ENCODE measurements at regions of chr10 and their contacts with region 1.

Region 1: DNA sequence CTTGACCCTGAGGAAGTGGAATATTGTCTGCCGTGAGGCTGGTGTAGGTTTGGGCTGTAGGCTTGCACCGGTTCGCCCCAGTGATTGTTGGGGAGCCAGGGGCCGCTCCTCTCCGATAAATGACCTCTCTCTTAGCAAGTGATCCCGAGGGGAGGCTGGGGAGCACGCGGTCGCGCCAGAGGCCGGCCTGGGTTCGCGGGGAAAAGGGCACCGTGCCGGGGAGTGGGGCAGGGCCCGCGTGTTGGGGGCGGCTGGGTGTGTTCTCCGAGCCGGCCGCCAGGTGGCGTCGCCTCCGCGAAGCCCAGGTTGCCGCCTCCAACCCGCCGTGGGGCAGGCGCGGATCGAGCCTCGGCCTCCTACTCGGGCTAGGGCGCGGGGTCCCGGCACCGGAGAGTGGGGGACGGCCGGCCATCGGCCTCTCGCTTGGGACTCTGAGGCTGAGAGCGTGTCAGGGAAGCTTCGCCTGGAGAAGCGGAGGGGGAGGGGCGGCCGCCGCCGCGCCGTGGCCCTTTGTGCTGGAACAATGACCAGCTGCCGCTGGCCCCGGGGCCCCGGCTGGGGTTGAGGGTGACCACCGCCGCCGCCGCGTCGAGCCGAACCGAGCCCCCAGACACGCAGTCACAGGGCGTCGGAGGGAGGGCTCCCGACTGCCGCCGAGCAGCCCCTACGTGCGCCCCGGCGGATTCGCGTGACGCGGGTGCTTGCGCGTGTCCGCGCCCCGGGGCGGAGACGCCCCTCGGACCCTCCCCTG is 442 bp upstream of the LZTS2 start:
- DNase-seq: peak; percentile 68
- H3K4me3 Mint-ChIP-seq: peak overlapping the region; percentile 76
- H3K27ac Mint-ChIP-seq: peak overlapping the region; percentile 44
- H3K4me1 Mint-ChIP-seq: peaks cover 19% of the 10 kb centered on the region
- H3K27me3 Mint-ChIP-seq: no peaks in the 10 kb centered on the region
- CTCF ChIP-seq: peak; percentile 90

Region 2: DNA sequence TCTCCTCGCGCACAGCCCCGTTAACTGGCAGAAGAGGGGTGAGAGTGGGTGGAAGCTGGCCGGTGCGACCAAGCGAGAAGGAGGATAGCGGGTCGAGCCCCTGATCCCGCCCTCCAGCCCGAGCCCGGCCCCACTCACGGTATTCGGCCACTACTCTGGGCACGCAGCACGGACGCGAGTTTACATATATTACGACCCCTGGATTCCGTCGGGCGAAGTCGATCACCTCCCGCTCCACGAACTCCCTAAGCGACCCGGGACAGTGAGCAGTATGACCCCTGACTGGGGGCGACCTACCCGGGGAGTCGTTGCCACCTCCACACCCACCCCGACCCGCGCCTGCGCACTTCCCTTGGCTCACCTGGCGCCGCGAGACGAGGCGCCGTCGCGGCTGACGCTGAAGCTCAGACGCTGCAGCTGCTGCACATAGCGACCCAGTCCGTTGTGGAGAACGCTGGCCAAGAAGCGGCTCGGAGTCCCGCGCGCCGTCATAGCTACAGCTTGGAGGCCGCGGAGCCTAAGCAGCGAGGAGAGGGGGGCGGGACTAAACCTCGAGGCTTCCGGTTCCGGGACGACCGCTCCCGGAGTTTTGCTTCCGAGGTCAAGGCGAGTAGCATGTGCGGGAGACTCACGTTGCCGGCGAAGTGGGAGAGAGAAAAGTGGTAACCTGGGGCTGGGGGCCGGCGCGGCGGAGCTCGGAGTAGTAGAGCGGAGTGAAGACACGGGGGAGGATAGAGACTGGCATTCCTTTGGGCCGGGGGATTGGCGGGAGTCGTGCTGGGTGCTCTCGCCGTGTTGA is 12.0 kb before region 1 on chr10 and contains the starts of genes MRPL43 and TWNK:
- CTCF ChIA-PET with region 1: interaction called, 32 read pairs
- POLR2A ChIA-PET with region 1: interaction called, 54 read pairs
- intact Hi-C with region 1: no loop called
- DNase-seq: peak; percentile 81
- H3K4me3 Mint-ChIP-seq: peak within 1 kb of the TSS; percentile 85
- H3K27ac Mint-ChIP-seq: peak within 1 kb of the TSS; percentile 80
- H3K4me1 Mint-ChIP-seq: peaks cover 15% of the 10 kb centered on the region
- H3K27me3 Mint-ChIP-seq: no peaks in the 10 kb centered on the region
- CTCF ChIP-seq: no peak
- total RNA-seq, gene MRPL43: 63.4 and 64.8 TPM in 2 replicates
- total RNA-seq, gene TWNK: 19.1 and 27.9 TPM in 2 replicates

Region 3: DNA sequence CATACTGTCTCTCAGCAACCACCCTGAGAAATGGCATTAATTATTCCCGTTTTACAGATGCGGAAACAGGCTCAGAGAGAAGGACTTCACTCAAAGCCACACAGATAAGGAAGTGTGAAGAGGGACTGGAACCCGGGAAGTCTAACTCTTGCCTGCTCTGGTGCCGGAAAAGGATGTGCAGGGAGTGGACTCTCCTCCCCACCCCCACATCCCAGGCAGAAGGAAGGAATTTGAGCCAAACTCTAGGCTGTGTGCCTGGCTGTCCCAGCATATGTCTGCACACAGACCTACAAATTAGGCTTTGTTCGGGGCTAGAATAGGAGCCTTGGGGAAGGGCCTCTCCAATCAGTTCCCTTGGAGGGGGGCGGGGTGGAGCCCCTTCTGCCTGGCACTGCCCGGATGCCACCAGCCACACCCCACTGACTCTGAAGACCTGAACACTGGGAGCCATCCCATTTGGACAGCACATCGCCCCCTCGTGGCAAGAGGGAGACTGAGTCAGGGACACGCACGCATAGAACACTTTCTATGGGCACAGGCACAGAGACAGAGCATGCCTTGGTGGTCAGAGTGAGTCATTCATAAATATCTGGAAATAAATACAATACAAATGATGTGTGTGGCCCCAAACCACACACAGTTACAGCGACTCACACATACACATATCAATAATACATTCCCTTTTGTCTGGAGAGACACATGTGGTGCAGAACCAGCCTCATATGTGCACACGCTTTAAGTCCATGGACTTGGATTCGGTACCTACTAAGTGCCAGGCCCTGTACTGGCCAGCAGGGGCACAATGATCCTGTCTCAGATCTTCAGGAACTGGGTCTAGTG is 13.6 kb after region 1 on chr10:
- CTCF ChIA-PET with region 1: interaction called, 199 read pairs
- POLR2A ChIA-PET with region 1: interaction called, 26 read pairs
- intact Hi-C with region 1: loop called (anchors 1 kb)
- DNase-seq: peak; percentile 95
- H3K4me3 Mint-ChIP-seq: no peak overlapping the region
- H3K27ac Mint-ChIP-seq: peak overlapping the region; percentile 29
- H3K4me1 Mint-ChIP-seq: peaks cover 26% of the 10 kb centered on the region
- H3K27me3 Mint-ChIP-seq: no peaks in the 10 kb centered on the region
- CTCF ChIP-seq: peak; percentile 67

Region 4: DNA sequence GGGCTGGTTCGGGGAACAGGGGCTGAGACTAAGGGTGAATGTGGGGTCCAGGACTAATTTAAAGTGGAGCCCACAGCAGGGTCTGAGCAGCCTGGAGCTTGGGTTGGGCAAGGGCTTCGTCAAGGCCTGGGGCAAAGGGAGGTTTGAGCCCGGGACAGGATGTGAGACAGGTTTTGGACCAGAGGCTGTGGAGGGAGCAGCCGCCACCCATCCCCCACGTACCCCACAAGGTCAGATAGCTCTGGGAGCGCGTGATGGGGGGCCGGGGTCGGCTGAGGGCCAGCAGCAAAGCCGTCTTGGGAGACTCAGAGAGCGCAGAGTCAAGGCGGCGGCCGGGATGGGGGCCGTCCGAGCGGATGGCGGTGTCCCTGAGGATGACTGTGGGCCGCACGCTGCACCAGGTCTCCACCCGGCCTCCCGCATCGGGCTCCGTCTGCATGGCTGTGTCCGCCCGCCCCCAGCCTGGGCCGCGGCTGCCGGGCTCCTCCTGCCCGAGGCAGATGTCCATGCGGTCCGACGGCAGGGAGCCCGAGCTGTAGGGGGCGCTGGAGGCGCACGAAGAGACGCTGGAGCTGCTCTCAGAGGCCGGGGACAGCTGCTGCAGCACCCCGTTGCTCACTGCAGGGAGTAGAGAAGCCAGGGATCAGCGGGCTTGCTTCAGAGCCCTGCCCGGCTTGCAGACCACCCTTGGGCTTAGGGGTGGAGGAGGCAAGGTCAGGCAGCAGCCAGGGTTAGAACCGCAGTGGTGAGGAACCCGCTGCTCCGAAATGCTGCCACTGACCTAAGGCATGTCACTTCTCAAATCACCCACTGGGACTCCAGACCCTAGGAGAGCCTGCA is 19.7 kb after region 1 on chr10:
- CTCF ChIA-PET with region 1: interaction called, 199 read pairs
- POLR2A ChIA-PET with region 1: interaction called, 26 read pairs
- intact Hi-C with region 1: no loop called
- DNase-seq: peak; percentile 71
- H3K4me3 Mint-ChIP-seq: no peak overlapping the region
- H3K27ac Mint-ChIP-seq: peak overlapping the region; percentile 85
- H3K4me1 Mint-ChIP-seq: peaks cover 20% of the 10 kb centered on the region
- H3K27me3 Mint-ChIP-seq: no peaks in the 10 kb centered on the region
- CTCF ChIP-seq: peak; percentile 76

Region 5: GRCh38 chr10:101031128-101031795 is 32.1 kb after region 1 on chr10 and contains the starts of genes PDZD7 and SFXN3:
- CTCF ChIA-PET with region 1: interaction called, 13 read pairs
- POLR2A ChIA-PET with region 1: interaction called, 74 read pairs
- intact Hi-C with region 1: no loop called
- DNase-seq: peak; percentile 89
- H3K4me3 Mint-ChIP-seq: peak within 1 kb of the TSS; percentile 93
- H3K27ac Mint-ChIP-seq: peak within 1 kb of the TSS; percentile 94
- H3K4me1 Mint-ChIP-seq: peaks cover 31% of the 10 kb centered on the region
- H3K27me3 Mint-ChIP-seq: no peaks in the 10 kb centered on the region
- CTCF ChIP-seq: no peak
- total RNA-seq, gene PDZD7: 0.27 and 0.58 TPM in 2 replicates
- total RNA-seq, gene SFXN3: 39.4 and 55.2 TPM in 2 replicates

Region 6: GRCh38 chr10:101042667-101043355 is 43.6 kb after region 1 on chr10:
- CTCF ChIA-PET with region 1: interaction called, 6 read pairs
- POLR2A ChIA-PET with region 1: interaction called, 24 read pairs
- intact Hi-C with region 1: no loop called
- DNase-seq: peak; percentile 98
- H3K4me3 Mint-ChIP-seq: peak overlapping the region; percentile 98
- H3K27ac Mint-ChIP-seq: peak overlapping the region; percentile 100
- H3K4me1 Mint-ChIP-seq: peaks cover 29% of the 10 kb centered on the region
- H3K27me3 Mint-ChIP-seq: no peaks in the 10 kb centered on the region
- CTCF ChIP-seq: no peak